OCI-LY7 (cell line): ENCODE measurements at regions of chr22 and their contacts with region 1.

Region 1: GRCh38 chr22:48444320-48445112 is 1383.2 kb downstream of the BRD1 start:
- DNase-seq: peak; percentile 92
- H3K4me3 ChIP-seq: peak overlapping the region; percentile 38
- H3K27ac ChIP-seq: peak overlapping the region; percentile 55
- H3K4me1 ChIP-seq: peaks cover 34% of the 10 kb centered on the region
- CTCF ChIP-seq: no peak

Region 2: DNA sequence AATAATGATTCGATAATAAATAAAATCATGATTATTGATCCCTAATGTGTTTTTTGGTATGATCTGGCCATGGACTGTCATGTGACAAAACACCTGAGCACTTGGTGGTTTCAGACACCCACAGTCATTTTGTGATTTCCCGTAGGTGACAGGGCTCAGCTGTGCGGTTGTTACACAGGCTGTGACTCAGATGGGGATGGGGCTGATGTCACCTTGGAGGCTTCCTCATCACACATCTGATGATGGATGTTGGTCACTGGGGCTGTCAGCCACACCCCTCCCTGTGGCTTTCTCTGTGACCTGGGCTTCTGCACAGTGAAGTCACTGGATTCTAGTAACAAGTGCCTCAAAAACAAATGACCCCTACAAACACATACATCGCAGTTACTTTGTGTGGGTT is 388.1 kb after region 1 on chr22:
- CTCF ChIA-PET with region 1: no interaction called
- POLR2A ChIA-PET with region 1: no interaction called
- intact Hi-C with region 1: loop called (anchors 10 kb)
- DNase-seq: no peak
- H3K4me3 ChIP-seq: no peak overlapping the region
- H3K27ac ChIP-seq: no peak overlapping the region
- H3K4me1 ChIP-seq: peaks cover 21% of the 10 kb centered on the region
- CTCF ChIP-seq: no peak